ENCODE measurements at regions of chr3 and their contacts with region 1.

Region 1: DNA sequence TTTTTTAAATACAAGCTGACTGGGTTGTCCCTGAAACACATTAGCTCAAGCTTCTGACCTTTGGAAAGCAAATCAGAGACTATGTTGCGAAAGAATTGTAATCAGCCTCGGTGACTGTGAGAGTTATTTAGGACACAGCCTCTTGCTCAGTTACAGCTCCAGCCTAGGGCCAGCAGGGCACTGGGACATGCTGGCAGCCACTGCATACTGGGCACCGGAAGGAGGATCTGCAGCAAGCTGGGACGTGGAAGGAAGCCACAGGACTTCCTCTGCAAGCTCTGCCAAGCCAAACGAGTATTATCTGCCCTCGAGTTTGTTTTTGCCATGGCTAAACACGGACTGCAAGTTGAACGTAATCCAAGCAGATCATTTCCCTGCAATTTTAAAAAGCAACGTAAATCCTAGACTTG is 24.4 kb upstream of the COPG1 start:
- DNase-seq: peak; percentile 93
- ATAC-seq: peak; percentile 96

Region 2: GRCh38 chr3:129160891-129161859 is 63.8 kb before region 1 on chr3 and contains the start of gene ISY1:
- intact Hi-C with region 1: loop called (anchors 1 kb)
- DNase-seq: peak; percentile 92
- ATAC-seq: peak; percentile 92
- total RNA-seq, gene ISY1: 25.1 TPM

Region 3: GRCh38 chr3:129183569-129184395 is 41.2 kb before region 1 on chr3 and contains the start of gene CNBP:
- intact Hi-C with region 1: loop called (anchors 2 kb)
- DNase-seq: peak; percentile 98
- ATAC-seq: peak; percentile 100
- total RNA-seq, gene CNBP: 458 TPM

Region 4: DNA sequence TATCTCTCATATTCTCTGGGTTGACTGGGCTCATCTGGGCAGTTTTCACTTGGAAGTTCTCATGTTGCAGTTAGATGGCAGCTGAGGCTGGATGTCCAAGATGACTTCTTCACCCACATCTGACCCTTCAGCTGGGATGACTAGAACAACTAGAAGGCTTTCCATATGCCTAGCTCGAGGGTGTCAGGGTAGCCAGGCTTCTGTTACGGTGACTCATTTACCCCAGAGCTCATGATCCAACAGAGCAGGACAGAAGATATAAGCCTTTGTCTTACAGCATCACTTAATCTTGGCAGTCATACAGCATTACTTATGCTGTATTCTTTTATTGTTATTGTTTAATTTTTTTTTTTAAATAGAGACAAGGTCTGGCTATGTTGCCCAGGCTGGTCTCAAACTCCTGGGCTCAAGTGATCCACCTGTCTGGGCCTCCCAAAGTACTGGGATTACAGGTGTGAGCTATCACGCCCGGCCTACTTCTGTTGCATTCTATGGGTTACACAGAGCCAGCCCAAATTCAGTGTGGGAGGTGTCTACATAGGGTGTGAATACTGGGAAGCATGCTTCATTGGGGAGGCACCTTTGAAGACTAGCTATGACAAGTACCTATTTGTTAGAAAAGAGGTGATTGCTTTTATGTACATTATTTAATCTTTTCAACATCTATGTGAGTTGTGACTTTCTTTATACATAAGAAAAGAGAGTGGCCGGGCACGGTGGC is 64.4 kb after region 1 on chr3:
- intact Hi-C with region 1: no loop called
- DNase-seq: no peak
- ATAC-seq: no peak

Measured in Right ventricle myocardium inferior (tissue), 1 donor.